Endothelial cell of umbilical vein (primary cell): ENCODE measurements at regions of chr6 and their contacts with region 1.

Region 1: GRCh38 chr6:710601-711571 is 17.9 kb upstream of the EXOC2 start:
- DNase-seq: peak; percentile 70
- H3K4me3 ChIP-seq: peak overlapping the region; percentile 20 to 43 (median 42)
- H3K27ac ChIP-seq: peak overlapping the region; percentile 88
- H3K4me1 ChIP-seq: peaks cover 79% of the 10 kb centered on the region
- H3K27me3 ChIP-seq: no peaks in the 10 kb centered on the region
- CTCF ChIP-seq: no peak
- POLR2A ChIP-seq: peak; percentile 48

Region 2: GRCh38 chr6:692855-693722 is 17.8 kb before region 1 on chr6 and contains the start of gene EXOC2:
- CTCF ChIA-PET with region 1: interaction called, 5 read pairs
- POLR2A ChIA-PET with region 1: no interaction called
- dilution Hi-C with region 1: no loop called
- intact Hi-C with region 1: loop called (anchors 1 kb)
- DNase-seq: peak; percentile 79
- H3K4me3 ChIP-seq: peak within 1 kb of the TSS; percentile 87 to 90 (median 87)
- H3K27ac ChIP-seq: peak within 1 kb of the TSS; percentile 71
- H3K4me1 ChIP-seq: peaks cover 15% of the 10 kb centered on the region
- H3K27me3 ChIP-seq: no peaks in the 10 kb centered on the region
- CTCF ChIP-seq: no peak
- POLR2A ChIP-seq: no peak
- total RNA-seq, gene EXOC2: 30.8 and 39.7 TPM in 2 replicates

Region 3: DNA sequence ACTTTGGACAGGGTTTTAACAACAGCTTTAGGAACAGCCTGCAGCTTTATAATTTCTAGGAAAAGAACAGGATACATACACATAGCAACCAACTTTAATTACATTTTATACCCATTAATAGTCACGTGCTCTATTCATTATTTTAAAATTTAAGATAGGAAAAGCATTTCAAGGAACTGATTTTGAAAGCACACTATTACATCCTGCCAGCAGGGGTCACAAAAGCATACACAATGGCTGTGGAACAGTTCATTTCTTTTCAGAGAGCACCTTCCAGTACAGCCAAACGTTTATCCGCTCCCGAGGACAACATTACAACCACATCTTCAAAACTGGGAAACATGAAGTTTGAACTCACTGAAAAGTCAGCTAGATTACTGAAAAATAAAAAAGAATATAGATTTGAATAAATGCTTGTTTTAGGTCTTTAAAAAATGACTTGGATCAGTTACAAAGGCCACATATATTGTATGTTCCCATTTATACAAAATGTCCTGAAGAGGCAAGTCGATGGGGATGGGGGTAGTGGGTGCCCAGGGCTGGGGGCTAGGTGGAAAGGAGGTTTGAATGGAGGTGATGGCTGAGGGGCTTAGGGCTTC is 86.7 kb after region 1 on chr6:
- CTCF ChIA-PET with region 1: no interaction called
- POLR2A ChIA-PET with region 1: no interaction called
- dilution Hi-C with region 1: no loop called
- intact Hi-C with region 1: no loop called
- DNase-seq: peak; percentile 65
- H3K4me3 ChIP-seq: no peak overlapping the region
- H3K27ac ChIP-seq: no peak overlapping the region
- H3K4me1 ChIP-seq: no peaks in the 10 kb centered on the region
- H3K27me3 ChIP-seq: peaks cover 3 to 16% of the 10 kb centered on the region in 2 experiments
- CTCF ChIP-seq: peak; percentile 55 to 61
- POLR2A ChIP-seq: no peak